ENCODE measurements at regions of chr12 and their contacts with region 1.

Region 1: GRCh38 chr12:11067514-11067913 is 5.4 kb upstream of the TAS2R46 start:
- DNase-seq: no peak
- ATAC-seq: no peak
- H3K4me3 Mint-ChIP-seq: no peak overlapping the region
- H3K27ac Mint-ChIP-seq: no peak overlapping the region
- H3K4me1 Mint-ChIP-seq: peaks cover 19% of the 10 kb centered on the region
- H3K27me3 Mint-ChIP-seq: no peaks in the 10 kb centered on the region
- CTCF ChIP-seq: no peak

Region 2: DNA sequence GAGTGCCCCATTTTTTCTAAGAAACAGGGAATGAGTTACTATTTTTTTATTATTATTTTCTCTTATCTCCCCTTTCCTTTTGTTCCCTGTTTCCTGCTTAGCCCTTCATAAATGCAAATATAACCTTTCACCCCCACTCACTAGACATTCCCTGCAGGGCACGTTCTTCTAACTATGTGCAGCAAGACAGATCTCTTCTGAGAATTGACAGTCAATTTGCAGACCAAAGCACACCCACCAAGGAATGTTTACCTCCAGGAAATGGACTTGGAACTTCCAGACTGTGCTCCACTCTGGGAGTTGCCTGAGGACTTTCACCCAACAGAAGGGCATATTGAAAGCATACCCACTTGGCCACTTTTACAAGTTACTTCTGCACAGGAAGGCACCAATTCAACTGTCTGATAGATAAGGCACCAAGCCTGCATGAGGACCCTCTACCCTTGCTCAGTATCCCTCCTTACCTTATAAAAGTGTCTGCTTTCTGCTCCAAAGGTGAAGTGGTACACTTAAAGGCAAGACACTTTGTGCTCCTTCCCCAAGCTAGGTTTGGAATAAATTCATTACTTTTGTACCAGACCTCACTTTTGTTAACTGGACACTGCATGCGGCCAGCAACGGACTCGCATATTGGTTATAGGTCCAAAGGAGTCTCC is 51.6 kb before region 1 on chr12:
- CTCF ChIA-PET with region 1: no interaction called
- POLR2A ChIA-PET with region 1: no interaction called
- intact Hi-C with region 1: loop called (anchors 1 kb)
- DNase-seq: no peak
- ATAC-seq: no peak
- H3K4me3 Mint-ChIP-seq: no peak overlapping the region
- H3K27ac Mint-ChIP-seq: no peak overlapping the region
- H3K4me1 Mint-ChIP-seq: peaks cover 2% of the 10 kb centered on the region
- H3K27me3 Mint-ChIP-seq: no peaks in the 10 kb centered on the region
- CTCF ChIP-seq: no peak

Region 3: DNA sequence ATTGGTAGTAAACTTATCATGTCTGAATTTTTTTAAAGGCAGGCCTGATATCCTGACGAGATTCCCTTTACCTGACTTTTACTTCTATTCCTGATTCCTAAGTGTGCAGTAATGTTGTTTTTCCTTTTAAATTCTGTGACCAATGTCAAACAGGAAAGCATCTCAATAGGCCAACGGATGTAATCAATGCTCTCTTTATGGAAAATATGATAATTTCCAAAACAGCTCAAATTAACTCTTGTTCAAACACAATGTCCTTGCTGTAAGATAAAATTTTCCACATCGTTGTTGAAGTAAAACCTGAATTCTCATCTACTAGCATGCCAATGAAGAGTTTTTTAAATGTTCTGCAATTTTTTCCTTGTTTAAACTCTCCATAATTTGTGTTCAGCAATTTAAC is 28.3 kb before region 1 on chr12:
- CTCF ChIA-PET with region 1: no interaction called
- POLR2A ChIA-PET with region 1: no interaction called
- intact Hi-C with region 1: loop called (anchors 1 kb)
- DNase-seq: no peak
- ATAC-seq: no peak
- H3K4me3 Mint-ChIP-seq: no peak overlapping the region
- H3K27ac Mint-ChIP-seq: no peak overlapping the region
- H3K4me1 Mint-ChIP-seq: no peaks in the 10 kb centered on the region
- H3K27me3 Mint-ChIP-seq: no peaks in the 10 kb centered on the region
- CTCF ChIP-seq: no peak

Region 4: DNA sequence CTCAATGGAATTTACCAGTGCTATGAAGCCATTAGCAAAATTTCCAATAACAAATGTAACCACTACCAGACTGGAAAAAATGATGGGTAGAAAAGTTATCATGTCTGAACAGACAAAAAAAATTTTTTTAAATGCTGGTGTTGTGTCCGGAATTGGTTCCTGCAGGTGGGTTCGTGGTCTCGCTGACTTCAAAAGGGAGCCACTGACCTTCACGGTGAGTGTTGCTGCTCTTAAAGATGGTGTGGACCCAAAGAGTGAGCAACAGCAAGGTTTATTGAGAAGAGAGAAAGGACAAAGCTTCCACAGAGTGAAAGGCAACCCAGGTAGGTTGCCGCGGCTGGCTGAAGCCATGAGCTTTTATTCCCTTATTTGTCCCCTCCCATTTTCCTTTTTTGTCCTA is 24.6 kb after region 1 on chr12 and contains the start of gene TAS2R43:
- CTCF ChIA-PET with region 1: no interaction called
- POLR2A ChIA-PET with region 1: no interaction called
- intact Hi-C with region 1: loop called (anchors 1 kb)
- DNase-seq: no peak
- ATAC-seq: no peak
- H3K4me3 Mint-ChIP-seq: no peak within 1 kb of the TSS
- H3K27ac Mint-ChIP-seq: no peak within 1 kb of the TSS
- H3K4me1 Mint-ChIP-seq: peaks cover 8% of the 10 kb centered on the region
- H3K27me3 Mint-ChIP-seq: no peaks in the 10 kb centered on the region
- CTCF ChIP-seq: no peak
- total RNA-seq, gene TAS2R43: 1.7 and 2.7 TPM in 2 replicates

Measured in activated B cell treated with CpG ODN at 0.5 μM for 24 hours (primary cell).